Activated CD4-positive, alpha-beta T cell treated with anti-CD3 and anti-CD28 coated beads, Interleukin-2, amount 10 ng/mL, durations not matched to agents 24 days and 14 days (primary cell): ENCODE measurements at regions of chr11 and their contacts with region 1.

Region 1: DNA sequence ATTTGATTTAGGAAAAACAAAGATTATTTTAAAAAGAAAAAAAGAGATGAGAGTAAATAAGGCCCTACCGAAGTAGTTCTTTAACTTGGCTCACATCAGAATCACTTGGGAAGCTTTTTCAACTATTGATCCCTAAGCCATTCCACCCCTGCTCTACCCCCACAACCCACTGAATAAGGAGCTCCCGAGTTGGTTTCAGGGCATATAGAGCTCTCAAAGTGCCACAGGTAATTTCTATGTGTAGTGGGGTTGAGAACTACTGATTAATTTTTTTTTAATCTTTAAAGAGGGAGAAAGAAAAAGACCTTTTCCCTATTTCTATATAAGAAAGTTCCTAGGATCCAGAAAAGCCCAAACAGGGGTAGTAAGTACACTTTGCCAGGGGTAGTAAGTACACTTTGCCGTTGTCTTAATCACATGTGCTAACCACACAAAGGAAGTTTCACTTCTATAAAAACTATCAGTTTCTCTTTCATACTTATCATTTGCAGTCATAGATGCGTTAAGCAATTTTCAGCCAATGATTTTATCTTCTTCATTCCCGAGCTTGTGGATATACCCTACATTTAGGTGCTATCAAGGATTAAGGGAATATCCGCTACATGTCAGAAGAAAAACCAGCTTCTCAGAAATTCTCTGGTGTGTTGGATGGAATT is 108.4 kb upstream of the ZC3H12C start:
- DNase-seq: no peak
- H3K4me3 Mint-ChIP-seq: no peak overlapping the region
- H3K27ac Mint-ChIP-seq: no peak overlapping the region
- H3K4me1 Mint-ChIP-seq: peaks cover 13% of the 10 kb centered on the region
- H3K27me3 Mint-ChIP-seq: peaks cover 7% of the 10 kb centered on the region

Region 2: GRCh38 chr11:110077831-110078325 is 93.1 kb after region 1 on chr11:
- intact Hi-C with region 1: loop called (anchors 1 kb)
- DNase-seq: peak; percentile 80
- H3K4me3 Mint-ChIP-seq: peak overlapping the region; percentile 43
- H3K27ac Mint-ChIP-seq: peak overlapping the region; percentile 95
- H3K4me1 Mint-ChIP-seq: peaks cover 26% of the 10 kb centered on the region
- H3K27me3 Mint-ChIP-seq: peaks cover 5% of the 10 kb centered on the region

Region 3: GRCh38 chr11:110086892-110087309 is 102.1 kb after region 1 on chr11:
- intact Hi-C with region 1: loop called (anchors 2 kb)
- DNase-seq: no peak
- H3K4me3 Mint-ChIP-seq: no peak overlapping the region
- H3K27ac Mint-ChIP-seq: no peak overlapping the region
- H3K4me1 Mint-ChIP-seq: peaks cover 8% of the 10 kb centered on the region
- H3K27me3 Mint-ChIP-seq: peaks cover 20% of the 10 kb centered on the region